ENCODE measurements at regions of chr10 and their contacts with region 1.

Region 1: GRCh38 chr10:97759158-97759887 is 12.5 kb downstream of the SFRP5 start:
- DNase-seq: peak; percentile 43 to 63 (median 54)
- H3K4me3 ChIP-seq: no peak overlapping the region
- H3K27ac ChIP-seq: no peak overlapping the region
- H3K4me1 ChIP-seq: no peaks in the 10 kb centered on the region
- H3K27me3 ChIP-seq: no peaks in the 10 kb centered on the region

Region 2: GRCh38 chr10:97498076-97498840 is 261.1 kb before region 1 on chr10 and contains the start of gene MMS19:
- CTCF ChIA-PET with region 1: no interaction called
- POLR2A ChIA-PET with region 1: no interaction called
- DNase-seq: peak; percentile 96 to 98 (median 98)
- H3K4me3 ChIP-seq: peak within 1 kb of the TSS; percentile 77 to 99 (median 92)
- H3K27ac ChIP-seq: peak within 1 kb of the TSS; percentile 68 to 87
- H3K4me1 ChIP-seq: peaks cover 8 to 39% (median 33%) of the 10 kb centered on the region in 4 experiments
- H3K27me3 ChIP-seq: peaks cover 8 to 27% (median 14%) of the 10 kb centered on the region in 5 experiments

Region 3: GRCh38 chr10:97743169-97743943 is 16.0 kb before region 1 on chr10:
- CTCF ChIA-PET with region 1: interaction called, 19 read pairs
- POLR2A ChIA-PET with region 1: no interaction called
- DNase-seq: no peak
- H3K4me3 ChIP-seq: no peak overlapping the region
- H3K27ac ChIP-seq: no peak overlapping the region
- H3K4me1 ChIP-seq: peaks cover 0 to 4% (median 2%) of the 10 kb centered on the region in 4 experiments
- H3K27me3 ChIP-seq: no peaks in the 10 kb centered on the region

Region 4: DNA sequence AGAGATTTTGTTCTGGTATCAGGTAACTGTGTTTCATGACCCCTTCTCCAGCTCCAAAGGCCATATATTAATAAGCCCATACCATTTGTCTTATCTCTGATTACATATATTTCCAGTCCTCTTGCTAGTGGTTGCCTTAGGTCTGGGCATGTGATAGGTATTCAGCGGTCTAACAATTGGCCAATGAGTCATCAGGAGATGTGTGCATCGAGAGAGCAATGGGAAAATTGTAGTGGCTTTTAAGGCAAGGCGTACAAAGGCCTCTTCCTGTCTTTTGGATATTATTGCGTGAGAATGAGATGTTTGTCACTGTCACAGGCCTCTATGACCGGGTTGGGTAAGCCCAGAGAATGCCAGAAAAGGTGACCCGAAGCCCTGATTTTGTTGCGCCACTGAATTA is 51.1 kb after region 1 on chr10:
- CTCF ChIA-PET with region 1: no interaction called
- POLR2A ChIA-PET with region 1: no interaction called
- DNase-seq: no peak
- H3K4me3 ChIP-seq: no peak overlapping the region
- H3K27ac ChIP-seq: no peak overlapping the region
- H3K4me1 ChIP-seq: no peaks in the 10 kb centered on the region
- H3K27me3 ChIP-seq: peaks cover 0 to 12% (median 5%) of the 10 kb centered on the region in 5 experiments

Region 5: GRCh38 chr10:98262571-98262970 is 503.2 kb after region 1 on chr10:
- CTCF ChIA-PET with region 1: no interaction called
- POLR2A ChIA-PET with region 1: no interaction called
- DNase-seq: peak; percentile 46 to 63 (median 63)
- H3K4me3 ChIP-seq: no peak overlapping the region
- H3K27ac ChIP-seq: no peak overlapping the region
- H3K4me1 ChIP-seq: peaks cover 0 to 15% (median 10%) of the 10 kb centered on the region in 4 experiments
- H3K27me3 ChIP-seq: no peaks in the 10 kb centered on the region